ENCODE measurements at regions of chr9 and their contacts with region 1.

Region 1: GRCh38 chr9:93302551-93303257 is 118.8 kb downstream of the WNK2 start:
- DNase-seq: peak in 7 of 10 donors; percentile 20 to 48 (median 40)
- H3K4me3 ChIP-seq: no peak overlapping the region
- H3K27ac ChIP-seq: no peak overlapping the region
- H3K27me3 ChIP-seq: peaks cover 0 to 3% (median 0%) of the 10 kb centered on the region in 45 donors
- CTCF ChIP-seq: peak in 54 of 56 donors; percentile 18 to 65 (median 50)

Region 2: GRCh38 chr9:92963831-92964626 is 338.7 kb before region 1 on chr9:
- intact Hi-C with region 1: loop called in 1 of 2 experiments (anchors 10 kb)
- DNase-seq: no peak
- H3K4me3 ChIP-seq: peak overlapping the region in 38 of 59 donors; percentile 5 to 51 (median 32)
- H3K27ac ChIP-seq: peak overlapping the region in 8 of 59 donors; percentile 9 to 65 (median 37)
- H3K27me3 ChIP-seq: no peaks in the 10 kb centered on the region
- CTCF ChIP-seq: no peak

Region 3: GRCh38 chr9:93003552-93004407 is 298.9 kb before region 1 on chr9:
- intact Hi-C with region 1: loop called in 1 of 2 experiments (anchors 10 kb)
- DNase-seq: peak in 7 of 10 donors; percentile 40 to 81 (median 56)
- H3K4me3 ChIP-seq: peak overlapping the region in 41 of 59 donors; percentile 2 to 56 (median 34)
- H3K27ac ChIP-seq: no peak overlapping the region
- H3K27me3 ChIP-seq: no peaks in the 10 kb centered on the region
- CTCF ChIP-seq: peak; percentile 38 to 74 (median 61)

Region 4: DNA sequence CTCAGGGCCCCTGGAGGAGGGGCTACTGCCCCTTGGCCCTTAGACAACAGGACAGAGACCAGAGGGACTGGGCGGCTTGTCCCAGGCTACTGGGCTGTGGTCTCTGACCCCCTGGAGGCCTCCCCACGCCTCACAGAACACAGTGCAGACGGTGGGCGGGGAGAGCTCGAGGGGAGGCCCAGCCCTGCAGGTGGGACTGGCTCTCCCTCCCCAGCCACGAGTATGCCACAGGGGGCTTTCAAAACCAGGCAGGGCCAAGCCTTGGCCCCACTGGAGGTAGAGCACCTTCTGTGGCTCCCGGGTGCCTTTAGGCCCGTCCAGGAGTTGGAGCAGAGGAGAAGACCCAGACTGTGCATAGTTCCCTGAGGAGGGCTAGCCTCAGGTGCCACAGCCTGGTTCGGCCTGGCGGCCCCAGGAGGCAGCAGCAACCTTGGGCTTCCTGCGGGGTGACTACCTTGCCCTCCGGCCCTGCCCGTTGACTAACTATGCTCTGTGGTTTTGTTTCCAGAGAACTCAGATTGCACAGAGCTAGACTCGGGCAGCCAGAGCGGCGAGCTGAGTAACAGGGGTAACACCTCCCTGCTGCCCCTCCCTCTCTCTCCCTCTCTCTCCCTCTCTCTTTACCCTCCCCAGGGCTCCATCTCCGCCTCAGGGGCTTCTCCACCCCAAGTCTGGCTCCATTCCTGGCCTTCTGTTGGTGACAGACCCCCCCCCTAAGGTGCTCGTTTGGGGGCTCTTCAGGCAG is 191.2 kb before region 1 on chr9:
- intact Hi-C with region 1: loop called (anchors 2 to 5 kb)
- DNase-seq: peak in 4 of 10 donors; percentile 21 to 42 (median 32)
- H3K4me3 ChIP-seq: no peak overlapping the region
- H3K27ac ChIP-seq: peak overlapping the region in 4 of 59 donors; percentile 18 to 41 (median 26)
- H3K27me3 ChIP-seq: no peaks in the 10 kb centered on the region
- CTCF ChIP-seq: no peak

Region 5: GRCh38 chr9:93159601-93160471 is 142.9 kb before region 1 on chr9:
- intact Hi-C with region 1: loop called (anchors 2 to 5 kb)
- DNase-seq: peak; percentile 75 to 89 (median 78)
- H3K4me3 ChIP-seq: peak overlapping the region in 1 of 59 donors; percentile 16
- H3K27ac ChIP-seq: no peak overlapping the region
- H3K27me3 ChIP-seq: no peaks in the 10 kb centered on the region
- CTCF ChIP-seq: peak; percentile 71 to 98 (median 92)

Region 6: GRCh38 chr9:93336700-93337099 is 34.0 kb after region 1 on chr9:
- intact Hi-C with region 1: no loop called
- DNase-seq: no peak
- H3K4me3 ChIP-seq: no peak overlapping the region
- H3K27ac ChIP-seq: no peak overlapping the region
- H3K27me3 ChIP-seq: no peaks in the 10 kb centered on the region
- CTCF ChIP-seq: no peak